ENCODE measurements at regions of chr12 and their contacts with region 1.

Region 1: GRCh38 chr12:27462151-27462694 is 15.7 kb downstream of the SMCO2 start:
- DNase-seq: peak; percentile 60
- H3K4me3 Mint-ChIP-seq: peak overlapping the region; percentile 27
- H3K27ac Mint-ChIP-seq: peak overlapping the region; percentile 68
- H3K4me1 Mint-ChIP-seq: peaks cover 58% of the 10 kb centered on the region
- H3K27me3 Mint-ChIP-seq: no peaks in the 10 kb centered on the region

Region 2: DNA sequence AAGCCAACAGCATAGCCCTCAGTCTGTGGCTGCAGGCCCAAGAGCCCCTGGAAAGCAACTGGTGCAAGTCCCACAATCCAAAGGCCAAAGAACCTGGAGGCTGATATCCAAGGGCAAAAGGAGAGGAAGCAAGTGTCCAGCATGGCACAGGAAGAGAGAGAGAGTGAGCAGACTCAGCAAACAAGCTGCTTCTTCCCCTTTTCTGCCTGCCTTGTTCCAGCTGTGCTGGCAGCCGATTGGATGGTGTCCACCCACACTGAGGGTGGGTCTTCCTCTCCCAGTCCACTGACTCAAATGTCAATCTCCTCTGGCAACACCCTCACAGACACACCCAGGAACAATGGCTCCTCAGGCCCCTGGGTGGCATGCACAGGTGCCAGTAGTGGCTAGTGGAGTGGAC is 17.8 kb after region 1 on chr12:
- intact Hi-C with region 1: no loop called
- DNase-seq: peak; percentile 31
- H3K4me3 Mint-ChIP-seq: no peak overlapping the region
- H3K27ac Mint-ChIP-seq: no peak overlapping the region
- H3K4me1 Mint-ChIP-seq: no peaks in the 10 kb centered on the region
- H3K27me3 Mint-ChIP-seq: no peaks in the 10 kb centered on the region

Region 3: DNA sequence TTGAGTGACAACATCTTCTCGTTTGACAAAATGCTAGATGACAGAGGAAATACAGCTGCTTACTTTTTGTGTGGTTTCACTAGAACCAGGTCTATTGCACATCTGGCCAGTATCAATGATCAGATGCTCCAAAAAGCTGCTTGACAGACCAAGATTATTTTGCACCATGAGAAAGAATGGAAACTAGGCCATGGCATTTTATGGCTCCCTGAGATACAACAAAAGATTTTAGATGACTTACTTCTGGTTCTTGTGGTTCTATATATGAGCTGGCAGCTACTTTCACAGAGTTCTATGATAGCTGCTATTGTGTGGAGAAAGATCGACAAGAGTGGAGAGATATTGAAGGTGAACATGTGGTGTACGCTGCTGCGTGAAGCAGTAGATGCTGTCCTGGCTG is 35.9 kb after region 1 on chr12:
- intact Hi-C with region 1: loop called (anchors 1 kb)
- DNase-seq: peak; percentile 70
- H3K4me3 Mint-ChIP-seq: peak overlapping the region; percentile 34
- H3K27ac Mint-ChIP-seq: peak overlapping the region; percentile 47
- H3K4me1 Mint-ChIP-seq: peaks cover 46% of the 10 kb centered on the region
- H3K27me3 Mint-ChIP-seq: peaks cover 25% of the 10 kb centered on the region

Region 4: DNA sequence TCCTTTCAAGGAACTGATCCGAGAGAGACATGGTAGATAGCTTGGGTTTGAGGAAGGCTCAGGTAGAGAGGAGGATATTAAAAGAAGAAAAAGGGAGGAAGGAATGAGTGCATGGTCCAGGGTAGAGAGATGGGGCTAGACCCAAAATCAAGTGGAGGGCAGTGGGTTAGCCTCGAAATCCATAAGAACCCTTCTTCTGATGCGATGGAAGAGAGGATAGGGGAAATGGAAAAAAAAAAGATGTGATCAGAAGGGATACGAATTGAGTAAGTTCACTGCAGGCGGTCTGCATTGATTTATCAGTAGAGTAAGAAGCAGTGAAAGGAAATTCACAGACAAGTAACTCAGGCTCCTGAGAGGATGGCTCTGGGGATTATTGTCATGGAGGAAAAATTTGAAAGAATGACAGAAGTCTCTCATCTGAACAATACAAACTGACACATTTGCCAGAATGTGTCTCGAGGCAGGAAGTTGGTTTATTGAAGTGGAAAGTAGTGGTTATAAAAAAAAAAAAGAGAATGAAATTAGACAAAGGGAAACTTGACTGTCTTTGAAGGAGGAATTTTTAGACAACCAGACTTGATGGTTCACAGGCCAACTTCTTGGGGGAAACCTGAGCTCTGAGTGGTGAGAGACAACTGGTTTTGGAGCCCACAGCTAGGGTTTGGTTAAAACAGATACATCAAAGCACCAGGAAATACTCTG is 72.0 kb after region 1 on chr12:
- intact Hi-C with region 1: loop called (anchors 1 kb)
- DNase-seq: peak; percentile 78
- H3K4me3 Mint-ChIP-seq: peak overlapping the region; percentile 58
- H3K27ac Mint-ChIP-seq: peak overlapping the region; percentile 68
- H3K4me1 Mint-ChIP-seq: peaks cover 33% of the 10 kb centered on the region
- H3K27me3 Mint-ChIP-seq: peaks cover 5% of the 10 kb centered on the region

Region 5: GRCh38 chr12:27627123-27627835 is 165.1 kb after region 1 on chr12:
- intact Hi-C with region 1: loop called (anchors 5 kb)
- DNase-seq: no peak
- H3K4me3 Mint-ChIP-seq: peak overlapping the region; percentile 28
- H3K27ac Mint-ChIP-seq: peak overlapping the region; percentile 15
- H3K4me1 Mint-ChIP-seq: peaks cover 24% of the 10 kb centered on the region
- H3K27me3 Mint-ChIP-seq: peaks cover 4% of the 10 kb centered on the region

Measured in activated CD4-positive, alpha-beta T cell treated with anti-CD3 and anti-CD28 coated beads, Interleukin-2, amount 10 ng/mL, durations not matched to agents 24 days and 14 days (primary cell).